Activated naive CD8-positive, alpha-beta T cell treated with anti-CD3 and anti-CD28 coated beads, Interleukin-2, amount 10 ng/mL, durations not matched to agents 7 days and 5 days (primary cell): ENCODE measurements at regions of chr1 and their contacts with region 1.

Region 1: DNA sequence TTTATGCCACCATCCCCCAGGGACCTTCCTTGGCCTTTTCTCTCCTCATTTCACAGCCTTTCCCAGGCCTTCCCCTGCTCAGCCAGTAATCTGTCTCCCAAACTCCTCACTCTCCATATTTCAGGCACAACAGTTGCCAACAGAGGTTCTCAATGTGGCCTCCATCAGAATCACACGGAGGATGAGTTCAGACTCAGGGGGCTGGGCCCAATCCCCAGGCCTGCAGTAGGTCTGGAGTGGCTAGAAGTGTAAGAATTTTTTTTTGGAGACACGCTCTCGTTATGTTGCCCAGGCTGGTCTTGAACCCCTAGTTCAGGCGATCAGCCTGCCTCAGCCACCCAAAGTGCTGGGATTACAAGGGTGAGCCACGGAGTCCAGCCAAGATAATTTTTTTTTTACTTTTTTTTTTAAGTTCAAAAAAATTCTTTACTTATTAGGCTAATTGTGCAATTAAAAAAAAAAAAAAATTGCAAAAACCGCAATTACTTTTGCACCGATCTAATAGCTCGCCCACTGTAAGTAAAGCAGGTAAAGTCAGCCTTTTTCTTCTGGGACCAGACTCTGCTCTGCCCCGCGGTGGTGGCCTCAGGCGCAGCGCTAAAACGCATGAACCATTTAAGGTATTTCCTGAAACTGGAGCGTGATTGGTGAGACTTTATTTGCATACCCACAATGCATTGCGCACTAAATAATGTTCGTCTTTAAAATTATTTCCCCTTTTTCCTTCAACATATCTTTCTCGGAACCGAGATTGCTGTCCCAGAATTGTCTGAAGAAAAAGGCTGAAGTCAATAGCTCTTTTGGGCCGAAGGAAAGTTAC is 18.7 kb downstream of the KIAA2013 start:
- DNase-seq: peak; percentile 87
- ATAC-seq: peak; percentile 49
- H3K4me3 Mint-ChIP-seq: peak overlapping the region; percentile 92
- H3K27ac Mint-ChIP-seq: peak overlapping the region; percentile 100
- H3K4me1 Mint-ChIP-seq: peaks cover 38% of the 10 kb centered on the region
- H3K27me3 Mint-ChIP-seq: peaks cover 19% of the 10 kb centered on the region

Region 2: GRCh38 chr1:11099310-11100149 is 808.0 kb before region 1 on chr1 and contains the start of gene EXOSC10:
- POLR2A ChIA-PET with region 1: interaction called, 13 read pairs
- DNase-seq: peak; percentile 98
- ATAC-seq: peak; percentile 97
- H3K4me3 Mint-ChIP-seq: peak within 1 kb of the TSS; percentile 96
- H3K27ac Mint-ChIP-seq: peak within 1 kb of the TSS; percentile 96
- H3K4me1 Mint-ChIP-seq: peaks cover 12% of the 10 kb centered on the region
- H3K27me3 Mint-ChIP-seq: no peaks in the 10 kb centered on the region
- total RNA-seq, gene EXOSC10: 89.1 to 92.8 TPM

Region 3: GRCh38 chr1:11719313-11720032 is 188.0 kb before region 1 on chr1:
- POLR2A ChIA-PET with region 1: interaction called, 13 read pairs
- DNase-seq: peak; percentile 88
- ATAC-seq: peak; percentile 92
- H3K4me3 Mint-ChIP-seq: peak overlapping the region; percentile 66
- H3K27ac Mint-ChIP-seq: peak overlapping the region; percentile 90
- H3K4me1 Mint-ChIP-seq: peaks cover 16% of the 10 kb centered on the region
- H3K27me3 Mint-ChIP-seq: no peaks in the 10 kb centered on the region

Region 4: DNA sequence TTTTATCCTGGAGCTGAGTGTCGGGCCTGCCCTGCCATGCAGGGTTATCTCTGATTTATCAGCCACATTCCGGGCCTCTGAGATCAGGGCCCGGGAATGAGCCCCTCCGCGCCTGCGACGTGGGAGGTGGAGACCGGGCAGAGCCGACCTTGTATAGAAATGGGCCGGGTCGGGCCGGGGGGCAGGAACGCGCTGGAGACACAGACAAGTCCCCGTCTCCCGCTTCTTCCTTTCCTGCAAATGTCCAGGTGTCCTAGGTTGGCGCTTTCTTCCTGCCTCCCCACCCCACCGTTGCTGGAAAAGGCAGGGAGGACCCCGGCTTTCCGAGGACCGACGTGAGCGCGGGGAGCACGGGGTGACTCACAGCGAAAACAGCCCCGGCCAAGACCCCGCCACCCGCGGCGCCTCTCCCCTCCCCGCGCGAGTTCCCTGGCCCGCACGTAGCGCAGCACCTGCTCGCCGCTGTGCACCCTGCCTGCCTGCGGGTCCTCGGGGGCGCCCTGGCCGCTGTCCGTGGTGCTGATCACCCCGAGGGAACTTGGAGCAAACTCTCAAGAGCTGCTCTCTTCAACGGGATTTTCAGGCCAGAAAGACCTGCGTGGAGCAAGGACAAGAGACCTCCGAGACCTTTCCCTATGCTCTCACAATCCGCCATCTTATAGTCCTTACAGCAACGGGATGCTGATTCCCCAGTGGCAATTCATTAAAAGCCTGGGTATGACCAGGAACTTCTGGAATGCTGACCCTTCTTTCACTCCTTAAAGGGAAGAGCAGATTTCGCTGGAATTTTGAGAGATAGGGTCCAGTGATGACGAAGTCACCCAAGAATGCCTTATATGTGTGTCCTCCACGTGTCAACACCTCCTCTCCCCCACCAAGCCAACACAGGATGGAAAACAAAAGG is 48.3 kb before region 1 on chr1:
- POLR2A ChIA-PET with region 1: interaction called, 12 read pairs
- DNase-seq: peak; percentile 89
- ATAC-seq: peak; percentile 93
- H3K4me3 Mint-ChIP-seq: no peak overlapping the region
- H3K27ac Mint-ChIP-seq: no peak overlapping the region
- H3K4me1 Mint-ChIP-seq: peaks cover 12% of the 10 kb centered on the region
- H3K27me3 Mint-ChIP-seq: peaks cover 66% of the 10 kb centered on the region

Region 5: GRCh38 chr1:11934302-11935056 is 27.0 kb after region 1 on chr1 and contains the start of gene PLOD1:
- POLR2A ChIA-PET with region 1: interaction called, 165 read pairs
- DNase-seq: peak; percentile 84
- ATAC-seq: peak; percentile 99
- H3K4me3 Mint-ChIP-seq: peak within 1 kb of the TSS; percentile 83
- H3K27ac Mint-ChIP-seq: peak within 1 kb of the TSS; percentile 84
- H3K4me1 Mint-ChIP-seq: peaks cover 4% of the 10 kb centered on the region
- H3K27me3 Mint-ChIP-seq: no peaks in the 10 kb centered on the region
- total RNA-seq, gene PLOD1: 16.8 to 21.0 TPM

Region 6: DNA sequence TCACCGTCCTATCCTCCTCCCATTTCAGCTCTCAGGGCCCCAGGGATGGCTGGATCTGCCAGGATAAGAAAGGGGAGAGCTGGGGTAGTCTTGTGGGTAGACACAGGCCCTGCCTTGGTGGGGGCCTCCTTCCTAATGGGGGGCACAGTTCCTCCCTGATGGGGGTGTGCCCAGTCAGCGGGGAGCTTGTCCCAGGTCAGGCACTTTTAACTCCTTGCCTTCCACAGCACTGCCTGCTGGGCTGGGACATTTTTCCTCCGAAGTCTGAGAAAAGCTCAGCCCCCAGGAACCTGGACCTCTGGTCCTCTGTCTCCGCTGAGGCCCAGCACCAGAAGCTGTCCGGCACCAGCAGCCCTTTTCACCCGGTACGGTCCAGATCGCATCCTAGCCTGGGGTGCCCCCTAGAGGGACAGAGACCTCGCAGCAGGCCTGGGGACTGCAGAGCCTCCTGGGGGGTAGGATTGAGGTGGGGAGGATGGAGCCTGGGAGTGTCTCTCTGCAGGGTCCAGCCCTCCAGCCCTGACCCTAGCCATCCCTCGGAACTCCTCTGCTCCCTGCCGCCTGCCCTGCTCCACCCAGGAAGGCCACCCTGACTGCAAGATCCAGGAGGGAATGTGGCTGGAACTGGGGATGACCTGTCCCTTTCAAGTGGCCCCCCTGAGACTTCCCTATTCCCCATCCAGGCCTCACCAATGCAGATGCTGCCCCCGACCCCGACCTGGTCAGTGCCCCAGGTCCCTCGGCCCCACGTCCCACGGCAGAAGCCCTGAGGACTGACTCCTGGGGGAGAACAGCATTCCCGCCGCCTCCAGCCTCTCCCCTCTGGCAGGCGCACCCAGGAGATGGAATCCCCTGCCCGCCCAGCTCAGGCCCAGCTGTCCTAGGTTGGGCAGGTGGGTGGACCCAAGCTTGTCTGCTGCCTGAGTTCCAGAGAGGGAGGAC is 123.8 kb after region 1 on chr1:
- POLR2A ChIA-PET with region 1: interaction called, 19 read pairs
- DNase-seq: peak; percentile 60
- ATAC-seq: peak; percentile 75
- H3K4me3 Mint-ChIP-seq: no peak overlapping the region
- H3K27ac Mint-ChIP-seq: no peak overlapping the region
- H3K4me1 Mint-ChIP-seq: no peaks in the 10 kb centered on the region
- H3K27me3 Mint-ChIP-seq: no peaks in the 10 kb centered on the region

Region 7: GRCh38 chr1:12087797-12088314 is 180.4 kb after region 1 on chr1:
- POLR2A ChIA-PET with region 1: interaction called, 46 read pairs
- DNase-seq: peak; percentile 69
- ATAC-seq: peak; percentile 79
- H3K4me3 Mint-ChIP-seq: peak overlapping the region; percentile 61
- H3K27ac Mint-ChIP-seq: peak overlapping the region; percentile 85
- H3K4me1 Mint-ChIP-seq: peaks cover 31% of the 10 kb centered on the region
- H3K27me3 Mint-ChIP-seq: no peaks in the 10 kb centered on the region